ENCODE measurements at regions of chr12 and their contacts with region 1.

Region 1: DNA sequence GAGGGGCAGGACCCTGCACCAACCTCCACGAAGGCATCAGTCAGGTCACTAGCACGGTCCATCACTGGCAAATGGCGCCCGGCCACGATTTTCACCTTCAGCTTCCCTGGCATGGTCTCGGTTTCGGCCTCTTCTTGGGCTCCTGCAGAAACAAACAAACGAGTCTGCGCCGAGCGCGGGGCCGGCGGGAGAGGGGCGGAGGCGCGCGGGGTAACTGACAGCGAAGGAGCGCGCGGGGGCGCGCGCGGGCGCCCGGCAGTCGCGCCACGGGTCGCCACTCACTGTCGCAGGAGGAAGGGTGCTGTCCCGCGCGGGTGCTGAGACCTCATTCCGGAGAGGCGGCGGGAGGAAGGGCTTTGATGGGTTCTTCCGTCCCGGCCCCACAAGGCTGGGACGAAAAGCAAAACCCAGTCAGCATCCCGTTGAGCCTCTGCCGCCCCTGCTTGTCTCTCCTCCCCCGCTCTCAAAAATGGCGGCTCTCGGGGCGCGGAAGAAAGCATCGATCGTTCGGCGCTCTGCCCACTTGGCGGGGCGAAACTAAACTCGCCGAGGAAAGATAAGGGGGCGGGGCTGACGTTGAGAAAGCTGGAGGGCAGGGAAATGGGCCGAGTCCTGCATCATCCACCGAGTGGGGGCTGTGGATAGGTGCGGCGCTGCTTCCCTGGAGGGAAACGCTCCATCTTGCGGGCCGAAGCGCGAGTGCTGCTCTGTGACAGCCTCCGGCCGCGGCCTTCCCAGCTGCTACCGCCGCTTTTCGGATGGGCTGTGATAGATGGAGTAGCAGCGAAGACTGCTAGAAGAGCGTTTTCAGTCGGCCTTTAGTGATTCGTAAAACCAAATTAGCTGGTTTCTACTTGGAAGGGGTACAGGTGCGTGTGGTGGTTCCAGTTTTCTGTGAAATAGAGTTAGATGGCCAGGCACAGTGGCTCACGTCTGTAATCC is at the start of gene C2CD5:
- DNase-seq: peak; percentile 94
- H3K4me3 ChIP-seq: peak within 1 kb of the TSS; percentile 73 to 76
- H3K27ac ChIP-seq: peak within 1 kb of the TSS; percentile 95 to 96
- H3K4me1 ChIP-seq: no peaks in the 10 kb centered on the region
- H3K27me3 ChIP-seq: no peaks in the 10 kb centered on the region
- CTCF ChIP-seq: peak in 3 of 4 experiments; percentile 8 to 45 (median 9)
- POLR2A ChIP-seq: peak; percentile 67
- total RNA-seq, gene C2CD5: 26.6 to 37.6 TPM

Region 2: DNA sequence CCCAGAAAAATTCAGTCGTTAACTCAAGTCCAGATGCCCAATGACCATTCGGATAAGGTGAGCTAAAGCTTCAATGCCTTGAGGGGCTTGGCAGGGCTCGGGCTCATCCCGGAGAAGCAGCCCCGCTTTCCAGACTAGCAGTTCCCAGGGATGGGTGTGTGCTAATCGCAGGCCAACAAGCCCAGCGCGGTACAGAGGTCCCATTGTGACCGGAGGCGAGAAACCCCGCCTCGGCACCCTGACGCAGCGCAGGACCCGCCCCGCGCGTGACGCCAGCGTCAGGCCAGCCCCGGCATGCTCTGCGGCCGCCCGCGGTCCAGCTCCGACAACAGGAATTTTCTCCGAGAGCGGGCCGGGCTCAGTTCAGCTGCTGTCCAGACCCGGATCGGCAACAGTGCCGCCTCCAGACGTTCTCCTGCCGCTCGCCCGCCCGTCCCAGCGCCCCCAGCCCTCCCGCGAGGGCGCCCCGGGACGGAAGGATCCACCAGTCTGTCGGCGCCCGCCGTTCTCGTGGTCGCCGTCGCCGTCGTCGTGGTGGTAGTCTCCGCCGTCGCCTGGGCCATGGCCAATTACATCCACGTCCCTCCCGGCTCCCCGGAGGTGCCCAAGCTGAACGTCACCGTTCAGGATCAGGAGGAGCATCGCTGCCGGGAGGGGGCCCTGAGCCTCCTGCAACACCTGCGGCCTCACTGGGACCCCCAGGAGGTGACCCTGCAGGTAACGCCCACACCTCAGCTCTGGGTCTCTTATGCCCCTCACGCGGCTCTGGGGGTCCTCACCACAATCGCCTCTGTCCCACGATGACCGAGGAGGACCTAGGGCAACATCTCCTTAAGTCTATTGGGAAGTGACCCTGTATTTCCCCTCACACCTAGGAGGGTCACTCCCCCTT is 80.8 kb after region 1 on chr12 and contains the start of gene ETNK1:
- intact Hi-C with region 1: loop called (anchors 2 kb)
- DNase-seq: peak; percentile 97
- H3K4me3 ChIP-seq: peak within 1 kb of the TSS; percentile 86 to 97
- H3K27ac ChIP-seq: peak within 1 kb of the TSS; percentile 98 to 100
- H3K4me1 ChIP-seq: peaks cover 4% of the 10 kb centered on the region
- H3K27me3 ChIP-seq: no peaks in the 10 kb centered on the region
- CTCF ChIP-seq: peak in 2 of 4 experiments; percentile 7 to 15
- POLR2A ChIP-seq: peak; percentile 99
- total RNA-seq, gene ETNK1: 48.0 to 64.2 TPM

Region 3: GRCh38 chr12:22828073-22828472 is 283.8 kb after region 1 on chr12:
- intact Hi-C with region 1: no loop called
- DNase-seq: no peak
- H3K4me3 ChIP-seq: no peak overlapping the region
- H3K27ac ChIP-seq: no peak overlapping the region
- H3K4me1 ChIP-seq: no peaks in the 10 kb centered on the region
- H3K27me3 ChIP-seq: no peaks in the 10 kb centered on the region
- CTCF ChIP-seq: no peak
- POLR2A ChIP-seq: no peak